Activated CD8-positive, alpha-beta T cell treated with anti-CD3 and anti-CD28 coated beads for 36 hours (primary cell): ENCODE measurements at regions of chr1 and their contacts with region 1.

Region 1: GRCh38 chr1:98048244-98048643 is 127.4 kb upstream of the DPYD start:
- DNase-seq: peak; percentile 85
- ATAC-seq: peak; percentile 78
- H3K4me3 Mint-ChIP-seq: no peak overlapping the region
- H3K27ac Mint-ChIP-seq: no peak overlapping the region
- H3K4me1 Mint-ChIP-seq: peaks cover 32% of the 10 kb centered on the region
- H3K27me3 Mint-ChIP-seq: peaks cover 74% of the 10 kb centered on the region
- CTCF ChIP-seq: no peak

Region 2: GRCh38 chr1:97820470-97821188 is 227.6 kb before region 1 on chr1:
- CTCF ChIA-PET with region 1: interaction called, 5 read pairs
- POLR2A ChIA-PET with region 1: no interaction called
- intact Hi-C with region 1: loop called (anchors 10 kb)
- DNase-seq: no peak
- ATAC-seq: no peak
- H3K4me3 Mint-ChIP-seq: no peak overlapping the region
- H3K27ac Mint-ChIP-seq: no peak overlapping the region
- H3K4me1 Mint-ChIP-seq: no peaks in the 10 kb centered on the region
- H3K27me3 Mint-ChIP-seq: no peaks in the 10 kb centered on the region
- CTCF ChIP-seq: peak; percentile 68

Region 3: GRCh38 chr1:97920832-97921571 is 127.2 kb before region 1 on chr1 and contains the start of gene DPYD:
- CTCF ChIA-PET with region 1: interaction called, 5 read pairs
- POLR2A ChIA-PET with region 1: no interaction called
- intact Hi-C with region 1: loop called (anchors 5 kb)
- DNase-seq: peak; percentile 91
- ATAC-seq: peak; percentile 84
- H3K4me3 Mint-ChIP-seq: peak within 1 kb of the TSS; percentile 86
- H3K27ac Mint-ChIP-seq: peak within 1 kb of the TSS; percentile 93
- H3K4me1 Mint-ChIP-seq: peaks cover 47% of the 10 kb centered on the region
- H3K27me3 Mint-ChIP-seq: no peaks in the 10 kb centered on the region
- CTCF ChIP-seq: no peak
- total RNA-seq, gene DPYD: 10.7 to 10.8 TPM